ENCODE measurements at regions of chr2 and their contacts with region 1.

Region 1: DNA sequence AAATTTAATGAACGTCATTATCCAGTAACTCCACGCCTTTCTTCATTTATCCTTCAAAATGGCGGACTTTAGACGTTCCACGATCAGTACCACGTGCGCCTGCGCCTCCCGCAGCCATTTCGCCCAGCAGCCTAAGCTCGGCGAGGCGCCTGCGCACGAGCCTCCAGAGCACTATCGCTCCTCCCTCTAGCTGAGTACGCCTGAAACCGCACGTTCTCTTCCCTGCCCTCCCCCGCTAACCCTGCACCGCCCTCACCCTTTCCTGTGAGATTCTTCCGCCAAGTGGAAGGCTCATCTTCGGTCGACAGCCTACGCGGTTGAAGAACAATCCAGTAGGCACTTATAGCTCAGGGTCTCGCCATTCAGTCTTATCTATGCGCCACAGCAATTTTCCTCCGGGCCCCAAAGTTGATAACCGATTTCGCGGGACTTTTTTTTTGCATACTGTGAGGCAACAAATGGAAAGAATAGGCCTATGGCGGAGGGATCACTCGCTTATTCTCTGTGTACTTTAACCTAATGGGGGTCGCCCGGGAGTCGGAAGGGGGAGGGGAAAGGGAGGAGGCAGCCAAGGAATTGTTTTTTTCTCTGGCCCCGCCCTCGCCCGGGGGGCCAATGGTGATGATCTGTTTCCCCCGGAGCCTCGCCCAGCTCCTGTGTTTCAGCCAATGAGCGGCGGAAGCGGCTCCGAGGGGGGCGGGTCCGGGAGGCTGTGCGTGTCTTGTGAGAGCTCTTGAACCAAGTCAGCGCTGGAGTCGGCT is at the start of gene KDM3A:
- H3K4me3 Mint-ChIP-seq: peak within 1 kb of the TSS; percentile 89
- H3K27ac Mint-ChIP-seq: peak within 1 kb of the TSS; percentile 99
- H3K4me1 Mint-ChIP-seq: peaks cover 42% of the 10 kb centered on the region
- H3K27me3 Mint-ChIP-seq: peaks cover 2% of the 10 kb centered on the region

Region 2: GRCh38 chr2:86195055-86195807 is 245.6 kb before region 1 on chr2 and contains the start of gene IMMT:
- intact Hi-C with region 1: loop called (anchors 5 kb)
- H3K4me3 Mint-ChIP-seq: peak within 1 kb of the TSS; percentile 98
- H3K27ac Mint-ChIP-seq: peak within 1 kb of the TSS; percentile 100
- H3K4me1 Mint-ChIP-seq: peaks cover 43% of the 10 kb centered on the region
- H3K27me3 Mint-ChIP-seq: no peaks in the 10 kb centered on the region

Region 3: DNA sequence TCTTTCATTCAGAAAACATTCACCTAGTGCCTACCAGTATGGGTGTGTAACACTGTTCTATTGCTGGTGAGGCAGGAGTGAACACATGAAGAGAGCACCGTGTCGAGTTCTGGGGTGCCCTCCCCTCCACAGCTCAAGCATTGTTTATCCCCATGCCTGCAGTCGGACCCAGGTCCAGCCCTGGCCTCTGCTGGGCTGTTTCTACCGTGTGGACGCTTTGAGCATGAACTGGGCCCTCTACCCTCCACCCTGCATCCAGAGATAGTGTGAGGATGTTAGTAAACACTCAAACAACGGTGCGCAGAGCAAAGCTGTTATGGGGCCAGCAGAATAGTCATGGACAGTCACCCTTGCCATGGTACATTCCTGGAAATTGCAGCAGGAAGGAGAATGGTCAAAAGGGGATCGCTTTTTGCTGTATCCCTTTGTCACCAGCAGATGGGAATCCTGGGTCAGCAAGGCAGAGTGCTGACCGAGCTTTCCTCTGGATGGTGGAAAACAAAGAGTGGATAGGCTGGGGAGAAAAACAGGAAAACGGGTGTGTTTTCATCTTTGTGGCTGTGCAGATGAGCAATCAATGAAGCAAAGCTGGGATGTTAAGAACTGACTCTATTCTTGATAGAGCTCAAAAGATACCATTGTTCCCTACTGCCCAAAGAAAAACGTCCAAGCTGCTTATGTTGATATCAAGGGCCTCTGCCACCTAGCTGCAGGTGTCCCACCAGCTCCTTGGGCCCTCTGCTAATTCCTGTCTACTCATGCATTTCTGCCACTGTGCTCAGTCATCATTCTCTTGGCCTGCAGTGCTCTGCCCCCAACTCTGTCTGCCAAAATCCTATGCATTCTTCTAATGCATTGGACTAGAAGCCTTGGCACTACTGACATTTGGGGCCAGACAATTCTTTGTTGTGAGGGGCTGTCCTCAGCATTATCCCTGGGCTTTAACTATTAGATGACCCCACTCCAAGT is 142.1 kb before region 1 on chr2:
- intact Hi-C with region 1: no loop called
- H3K4me3 Mint-ChIP-seq: no peak overlapping the region
- H3K27ac Mint-ChIP-seq: no peak overlapping the region
- H3K4me1 Mint-ChIP-seq: no peaks in the 10 kb centered on the region
- H3K27me3 Mint-ChIP-seq: peaks cover 31% of the 10 kb centered on the region

Region 4: GRCh38 chr2:86396291-86396785 is 44.5 kb before region 1 on chr2:
- intact Hi-C with region 1: loop called (anchors 5 kb)
- H3K4me3 Mint-ChIP-seq: no peak overlapping the region
- H3K27ac Mint-ChIP-seq: no peak overlapping the region
- H3K4me1 Mint-ChIP-seq: peaks cover 10% of the 10 kb centered on the region
- H3K27me3 Mint-ChIP-seq: no peaks in the 10 kb centered on the region

Region 5: DNA sequence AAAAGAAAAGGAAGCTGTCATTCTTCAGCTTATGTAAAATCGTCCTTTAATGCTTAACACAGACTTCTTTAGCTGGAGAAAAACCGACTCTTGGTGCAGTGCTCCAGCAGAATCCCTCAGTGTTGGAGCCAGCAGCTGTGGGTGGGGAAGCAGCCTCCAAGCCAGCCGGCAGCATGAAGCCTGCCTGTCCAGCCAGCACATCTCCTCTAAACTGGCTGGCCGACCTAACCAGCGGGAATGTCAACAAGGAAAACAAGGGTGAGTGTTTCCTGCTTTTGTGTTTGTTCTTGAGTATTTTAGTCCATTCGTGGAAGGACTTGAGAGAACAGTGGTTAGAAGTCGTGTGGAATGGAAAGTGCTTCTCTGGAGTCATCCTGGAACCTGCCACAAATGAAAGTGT is 39.3 kb after region 1 on chr2:
- intact Hi-C with region 1: no loop called
- H3K4me3 Mint-ChIP-seq: no peak overlapping the region
- H3K27ac Mint-ChIP-seq: no peak overlapping the region
- H3K4me1 Mint-ChIP-seq: no peaks in the 10 kb centered on the region
- H3K27me3 Mint-ChIP-seq: no peaks in the 10 kb centered on the region

Region 6: DNA sequence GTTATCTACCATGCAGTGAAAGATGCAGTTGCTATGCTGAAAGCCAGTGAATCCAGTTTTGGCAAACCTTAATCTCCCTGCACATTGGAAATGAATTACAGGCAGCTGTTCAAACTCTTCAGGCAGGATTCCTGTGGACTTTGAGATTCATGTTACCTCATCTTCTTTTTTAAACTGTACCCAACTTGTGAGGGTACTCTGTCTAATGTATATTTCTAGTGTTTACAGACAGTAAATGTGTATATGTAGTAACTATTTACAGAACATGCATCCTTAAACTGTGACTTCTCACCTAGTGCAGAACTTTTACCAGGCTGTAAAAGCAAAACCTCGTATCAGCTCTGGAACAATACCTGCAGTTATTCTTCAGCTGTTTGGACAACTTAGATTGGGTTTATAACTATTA is 51.2 kb after region 1 on chr2:
- intact Hi-C with region 1: no loop called
- H3K4me3 Mint-ChIP-seq: no peak overlapping the region
- H3K27ac Mint-ChIP-seq: no peak overlapping the region
- H3K4me1 Mint-ChIP-seq: peaks cover 8% of the 10 kb centered on the region
- H3K27me3 Mint-ChIP-seq: no peaks in the 10 kb centered on the region

Region 7: DNA sequence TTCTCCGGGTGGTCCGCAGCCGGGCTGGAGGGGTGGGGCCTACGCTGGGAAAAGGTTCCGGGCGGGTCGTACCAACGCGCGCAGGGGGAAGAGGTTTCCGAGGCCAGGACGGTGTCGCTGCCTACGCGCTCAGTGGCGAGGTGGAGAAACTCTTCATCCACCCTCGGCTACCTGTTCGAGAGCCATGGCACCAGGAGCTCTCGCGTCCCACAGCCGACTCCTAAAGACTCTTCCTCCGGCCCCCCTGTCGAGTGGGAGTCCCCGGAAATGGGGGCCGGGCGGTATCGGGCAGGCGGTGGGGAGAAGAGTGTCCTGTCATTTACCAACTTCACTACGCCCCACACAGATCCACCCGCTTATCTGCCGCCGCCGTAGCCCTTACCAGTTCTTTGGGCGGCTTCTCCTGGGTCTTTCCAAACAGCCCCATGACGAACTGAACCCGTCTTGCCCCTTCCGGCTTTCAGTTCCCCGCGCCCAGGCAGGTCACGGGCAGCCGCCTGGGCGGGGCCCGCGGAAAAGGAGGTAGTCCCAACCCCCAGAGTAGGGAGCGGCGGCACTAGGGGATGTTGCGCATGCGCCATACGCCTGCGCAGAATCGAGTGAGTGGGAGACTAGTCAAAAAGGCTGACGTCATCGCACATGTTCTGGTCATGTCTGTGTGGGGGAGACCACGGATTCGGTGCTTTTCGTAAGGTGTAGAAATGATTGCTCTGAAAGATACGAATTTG is 122.3 kb after region 1 on chr2 and contains the start of gene CHMP3:
- intact Hi-C with region 1: loop called (anchors 2 kb)
- H3K4me3 Mint-ChIP-seq: peak within 1 kb of the TSS; percentile 94
- H3K27ac Mint-ChIP-seq: peak within 1 kb of the TSS; percentile 100
- H3K4me1 Mint-ChIP-seq: peaks cover 24% of the 10 kb centered on the region
- H3K27me3 Mint-ChIP-seq: no peaks in the 10 kb centered on the region

Region 8: DNA sequence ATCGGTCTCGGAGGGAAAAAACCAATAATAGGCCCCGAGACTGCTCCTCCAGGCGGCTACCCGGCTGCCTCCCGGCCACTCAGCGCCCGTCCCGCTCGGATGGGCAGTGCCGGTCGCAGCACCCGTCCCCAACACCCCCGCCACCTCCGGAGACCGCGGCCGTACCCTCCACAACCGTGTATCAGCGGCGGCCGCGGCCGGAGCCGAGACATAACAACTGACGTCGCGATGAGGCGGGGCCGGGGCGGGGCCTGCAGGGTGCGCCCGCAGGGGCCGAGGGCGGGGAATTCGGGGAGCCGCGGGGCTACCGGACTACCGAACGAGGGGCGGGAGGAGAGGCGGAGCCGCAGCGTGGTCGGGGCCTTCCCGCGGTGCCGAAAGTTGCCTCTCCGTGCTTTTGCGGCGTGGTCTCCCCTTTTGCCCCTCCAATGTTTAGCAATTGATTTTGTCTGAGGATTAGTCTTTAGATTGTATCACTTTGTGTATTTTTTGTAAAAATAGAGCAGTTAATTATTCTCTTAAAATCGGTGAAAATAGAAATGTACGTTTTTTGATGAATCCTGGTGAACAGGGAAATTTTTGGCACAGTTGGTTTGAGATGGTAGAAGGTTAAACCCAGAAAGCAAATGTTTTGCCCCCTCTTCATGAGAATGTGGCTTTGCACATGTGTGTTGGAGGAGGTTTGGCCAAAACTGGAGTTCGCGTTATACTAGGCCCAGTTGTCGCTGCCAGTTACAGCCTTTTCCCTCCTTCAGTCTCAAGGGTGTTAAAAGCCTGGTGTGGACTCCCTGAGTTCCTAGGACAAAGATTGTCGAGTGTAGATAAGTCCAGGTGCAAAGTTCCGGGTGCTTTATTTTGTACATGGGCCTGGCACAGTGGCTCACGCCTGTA is 183.1 kb after region 1 on chr2 and contains the start of gene RNF103:
- intact Hi-C with region 1: loop called (anchors 2 kb)
- H3K4me3 Mint-ChIP-seq: peak within 1 kb of the TSS; percentile 95
- H3K27ac Mint-ChIP-seq: peak within 1 kb of the TSS; percentile 97
- H3K4me1 Mint-ChIP-seq: peaks cover 22% of the 10 kb centered on the region
- H3K27me3 Mint-ChIP-seq: peaks cover 2% of the 10 kb centered on the region